ENCODE measurements at regions of chr4 and their contacts with region 1.

Region 1: GRCh38 chr4:165131247-165131832 is 18.7 kb upstream of the TMEM192 start:
- DNase-seq: no peak
- ATAC-seq: peak; percentile 85
- H3K4me3 ChIP-seq: no peak overlapping the region
- H3K27ac ChIP-seq: no peak overlapping the region
- H3K4me1 ChIP-seq: no peaks in the 10 kb centered on the region
- H3K27me3 ChIP-seq: no peaks in the 10 kb centered on the region

Region 2: GRCh38 chr4:165207431-165208220 is 76.3 kb after region 1 on chr4 and contains the start of gene KLHL2:
- intact Hi-C with region 1: loop called in 1 of 2 experiments (anchors 10 kb)
- DNase-seq: peak; percentile 91 to 93
- ATAC-seq: peak; percentile 95
- H3K4me3 ChIP-seq: peak within 1 kb of the TSS; percentile 88 to 97
- H3K27ac ChIP-seq: peak within 1 kb of the TSS; percentile 52 to 88
- H3K4me1 ChIP-seq: no peaks in the 10 kb centered on the region
- H3K27me3 ChIP-seq: no peaks in the 10 kb centered on the region
- total RNA-seq, gene KLHL2: 28.2 to 29.8 TPM

Region 3: DNA sequence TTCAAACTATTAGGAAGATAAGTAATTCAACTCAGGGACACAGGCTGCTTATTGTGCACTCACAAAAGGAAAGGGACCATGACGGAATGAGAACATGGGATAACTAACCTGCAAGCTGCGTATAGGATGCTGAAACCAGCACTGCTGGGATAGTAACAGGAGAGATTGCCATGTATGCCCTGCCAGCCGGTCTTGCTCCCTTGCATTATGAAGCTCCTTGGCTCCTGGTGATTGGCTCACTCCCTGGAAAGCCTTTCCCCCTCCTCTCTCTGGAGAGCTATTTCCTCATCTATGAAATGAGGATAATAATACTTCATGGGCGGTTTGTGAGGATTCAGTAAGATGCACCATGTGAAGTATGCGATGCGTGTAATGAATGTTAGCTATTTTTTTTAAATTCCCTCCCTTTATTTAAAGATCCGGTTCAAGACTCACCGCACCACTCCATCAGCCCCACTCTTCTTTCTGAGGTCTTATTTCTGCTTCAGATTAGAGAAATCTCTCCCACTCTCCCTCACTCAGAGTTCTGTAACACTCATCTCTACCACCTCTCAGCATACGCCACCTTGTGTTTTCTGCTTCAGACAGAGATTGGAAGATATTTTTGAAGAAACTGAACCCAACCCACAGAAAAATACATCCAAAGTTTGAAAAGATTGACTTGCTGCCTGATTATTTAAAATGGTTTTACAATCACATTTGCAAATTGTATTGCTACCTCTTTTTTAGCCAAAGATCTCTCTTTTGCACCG is 214.5 kb after region 1 on chr4:
- intact Hi-C with region 1: loop called (anchors 5 kb)
- DNase-seq: no peak
- ATAC-seq: no peak
- H3K4me3 ChIP-seq: no peak overlapping the region
- H3K27ac ChIP-seq: no peak overlapping the region
- H3K4me1 ChIP-seq: no peaks in the 10 kb centered on the region
- H3K27me3 ChIP-seq: no peaks in the 10 kb centered on the region

Region 4: DNA sequence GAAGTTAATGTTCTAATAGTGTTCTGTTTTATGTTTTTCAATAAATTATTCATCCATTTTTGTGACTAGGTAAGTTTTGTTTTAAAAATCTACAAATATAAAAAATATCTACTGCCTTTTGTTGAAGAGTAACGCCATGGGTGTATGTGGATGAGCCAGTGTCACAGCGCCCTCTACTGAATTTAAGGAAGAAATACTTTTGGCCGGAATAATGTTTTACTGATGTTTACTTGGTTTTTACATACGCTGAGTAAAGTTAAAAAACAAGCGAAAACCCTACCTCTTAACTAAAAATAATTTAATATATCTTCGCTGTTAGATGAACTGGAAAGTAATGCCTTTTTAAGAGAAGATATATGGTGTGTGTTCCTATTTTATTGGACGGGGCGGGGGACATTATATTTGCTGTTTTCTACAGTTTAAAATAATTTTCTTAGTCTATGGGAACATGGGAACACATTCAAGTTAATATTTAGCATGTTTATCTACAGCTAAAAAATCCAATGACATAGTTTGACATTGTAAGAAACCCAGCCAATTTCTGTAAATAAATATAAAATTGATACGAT is 333.6 kb after region 1 on chr4:
- intact Hi-C with region 1: loop called (anchors 1 to 2 kb)
- DNase-seq: no peak
- ATAC-seq: peak; percentile 77
- H3K4me3 ChIP-seq: no peak overlapping the region
- H3K27ac ChIP-seq: no peak overlapping the region
- H3K4me1 ChIP-seq: peaks cover 0 to 4% of the 10 kb centered on the region in 2 donors
- H3K27me3 ChIP-seq: no peaks in the 10 kb centered on the region

Measured in aorta (tissue), 5 donors.